OCI-LY7 (cell line): ENCODE measurements at regions of chr12 and their contacts with region 1.

Region 1: GRCh38 chr12:57390174-57390573 is 40.7 kb downstream of the R3HDM2 start:
- DNase-seq: no peak
- H3K4me3 ChIP-seq: no peak overlapping the region
- H3K27ac ChIP-seq: no peak overlapping the region
- H3K4me1 ChIP-seq: no peaks in the 10 kb centered on the region
- CTCF ChIP-seq: no peak

Region 2: GRCh38 chr12:57347284-57347683 is 42.9 kb before region 1 on chr12:
- CTCF ChIA-PET with region 1: no interaction called
- POLR2A ChIA-PET with region 1: no interaction called
- intact Hi-C with region 1: loop called (anchors 5 kb)
- DNase-seq: no peak
- H3K4me3 ChIP-seq: no peak overlapping the region
- H3K27ac ChIP-seq: no peak overlapping the region
- H3K4me1 ChIP-seq: no peaks in the 10 kb centered on the region
- CTCF ChIP-seq: no peak